ENCODE measurements at regions of chr15 and their contacts with region 1.

Region 1: GRCh38 chr15:57861036-57861638 is 154.6 kb downstream of the POLR2M start:
- DNase-seq: peak; percentile 7
- H3K4me3 ChIP-seq: no peak overlapping the region
- CTCF ChIP-seq: peak; percentile 55

Region 2: GRCh38 chr15:57640935-57641682 is 220.0 kb before region 1 on chr15:
- CTCF ChIA-PET with region 1: interaction called, 16 read pairs
- POLR2A ChIA-PET with region 1: no interaction called
- DNase-seq: no peak
- H3K4me3 ChIP-seq: no peak overlapping the region
- CTCF ChIP-seq: peak; percentile 53

Region 3: GRCh38 chr15:57732526-57733331 is 128.4 kb before region 1 on chr15:
- CTCF ChIA-PET with region 1: interaction called, 14 read pairs
- POLR2A ChIA-PET with region 1: no interaction called
- DNase-seq: no peak
- H3K4me3 ChIP-seq: no peak overlapping the region
- CTCF ChIP-seq: peak; percentile 75

Region 4: DNA sequence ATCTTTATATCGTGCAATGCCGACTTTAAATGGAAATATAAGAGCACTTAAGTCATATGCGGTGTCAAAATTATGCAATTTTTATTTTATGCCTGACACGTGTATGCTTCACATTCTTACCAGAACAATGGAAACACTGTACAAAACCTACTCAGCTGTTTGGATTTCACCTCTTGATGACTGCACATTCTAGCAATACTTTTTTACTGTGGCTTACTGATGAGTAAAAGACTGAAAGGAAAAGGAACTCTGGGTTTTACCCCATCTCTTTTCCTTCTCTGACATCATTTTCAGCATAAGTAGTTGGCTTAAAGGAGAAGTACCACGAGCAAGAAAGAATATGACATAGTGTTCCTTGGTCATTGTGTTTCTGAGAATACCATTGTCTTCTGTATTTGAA is 11.8 kb before region 1 on chr15:
- CTCF ChIA-PET with region 1: interaction called, 45 read pairs
- POLR2A ChIA-PET with region 1: no interaction called
- DNase-seq: no peak
- H3K4me3 ChIP-seq: no peak overlapping the region
- CTCF ChIP-seq: no peak

Region 5: GRCh38 chr15:57881361-57881760 is 20.2 kb after region 1 on chr15:
- CTCF ChIA-PET with region 1: interaction called, 16 read pairs
- POLR2A ChIA-PET with region 1: no interaction called
- DNase-seq: peak; percentile 69
- H3K4me3 ChIP-seq: no peak overlapping the region
- CTCF ChIP-seq: no peak